ENCODE measurements at regions of chr1 and their contacts with region 1.

Region 1: DNA sequence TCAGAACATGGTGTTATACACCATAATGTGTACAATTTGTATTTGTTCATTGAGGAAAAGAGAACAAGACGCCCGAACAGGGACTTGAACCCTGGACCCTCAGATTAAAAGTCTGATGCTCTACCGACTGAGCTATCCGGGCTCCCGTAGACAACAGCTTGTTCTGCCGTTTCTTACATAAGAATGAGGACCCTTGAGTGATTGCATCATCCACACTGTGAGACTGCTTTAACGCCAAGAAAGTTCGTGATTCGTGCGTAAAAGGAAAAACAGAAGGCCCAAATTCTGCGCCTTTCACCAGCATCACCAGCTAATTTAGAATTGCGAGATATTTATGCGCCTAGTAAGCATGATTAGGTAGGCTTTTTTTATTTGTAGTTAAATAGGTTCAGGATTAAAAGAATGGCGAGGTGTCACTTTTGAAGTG is 9.2 kb upstream of the MDM4 start:
- DNase-seq: peak; percentile 57 to 96 (median 93)
- ATAC-seq: peak; percentile 83
- H3K4me3 ChIP-seq: peak overlapping the region; percentile 66
- H3K4me3 Mint-ChIP-seq: peak overlapping the region; percentile 81 to 98 (median 94)
- H3K27ac ChIP-seq: peak overlapping the region; percentile 90
- H3K27ac Mint-ChIP-seq: peak overlapping the region; percentile 95 to 100 (median 99)
- H3K4me1 ChIP-seq: peaks cover 11 to 20% of the 10 kb centered on the region in 2 donors
- H3K4me1 Mint-ChIP-seq: peaks cover 19 to 57% (median 44%) of the 10 kb centered on the region in 7 donors
- H3K27me3 ChIP-seq: no peaks in the 10 kb centered on the region
- H3K27me3 Mint-ChIP-seq: peaks cover 0 to 6% (median 4%) of the 10 kb centered on the region in 5 donors

Region 2: DNA sequence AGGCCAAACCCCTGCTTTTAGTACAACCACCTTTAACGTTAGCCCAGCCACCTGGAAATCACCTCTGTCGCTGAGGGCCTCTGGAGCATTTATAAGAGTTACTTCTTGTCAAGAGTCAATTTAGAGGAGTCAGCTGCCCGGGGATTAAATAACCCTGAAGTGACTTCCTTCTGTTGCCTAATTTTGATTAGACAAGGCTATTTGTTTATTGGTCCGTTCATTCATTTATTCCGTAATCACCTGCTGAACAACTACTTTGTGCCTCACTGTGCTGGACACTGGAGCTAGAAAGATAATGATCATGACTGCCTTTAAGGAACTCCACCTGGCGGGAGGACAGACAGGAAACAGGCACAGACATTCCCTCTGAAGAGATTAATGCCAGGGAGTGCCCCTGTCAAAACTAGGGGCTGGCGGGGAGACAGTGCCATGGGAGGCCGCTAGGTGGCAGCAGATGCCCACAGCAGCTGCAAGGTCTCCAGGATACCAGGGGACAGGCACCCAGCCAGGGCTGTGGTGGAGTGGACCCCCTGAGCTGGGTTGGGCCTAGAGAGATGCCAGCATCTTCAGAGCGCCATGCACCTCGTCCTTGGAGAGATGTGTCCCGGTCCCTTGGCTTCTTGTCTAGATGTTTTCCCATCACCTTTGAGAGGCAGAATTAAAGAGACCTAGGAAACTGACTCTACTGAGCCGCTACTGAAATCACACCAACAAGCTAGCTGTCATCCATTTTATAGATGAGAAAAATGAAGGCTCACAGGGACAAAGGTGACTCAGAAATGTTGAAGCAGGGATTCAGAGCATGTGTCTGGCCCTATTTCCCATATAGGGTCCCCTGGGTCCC is 344.5 kb before region 1 on chr1:
- CTCF ChIA-PET with region 1: interaction called, 3 read pairs
- POLR2A ChIA-PET with region 1: no interaction called
- intact Hi-C with region 1: loop called (anchors 1 to 2 kb)
- DNase-seq: peak; percentile 60 to 81 (median 71)
- ATAC-seq: peak; percentile 90
- H3K4me3 ChIP-seq: no peak overlapping the region
- H3K4me3 Mint-ChIP-seq: no peak overlapping the region
- H3K27ac ChIP-seq: no peak overlapping the region
- H3K27ac Mint-ChIP-seq: no peak overlapping the region
- H3K4me1 ChIP-seq: no peaks in the 10 kb centered on the region
- H3K4me1 Mint-ChIP-seq: no peaks in the 10 kb centered on the region
- H3K27me3 ChIP-seq: no peaks in the 10 kb centered on the region
- H3K27me3 Mint-ChIP-seq: peaks cover 5 to 18% (median 9%) of the 10 kb centered on the region in 5 donors

Region 3: DNA sequence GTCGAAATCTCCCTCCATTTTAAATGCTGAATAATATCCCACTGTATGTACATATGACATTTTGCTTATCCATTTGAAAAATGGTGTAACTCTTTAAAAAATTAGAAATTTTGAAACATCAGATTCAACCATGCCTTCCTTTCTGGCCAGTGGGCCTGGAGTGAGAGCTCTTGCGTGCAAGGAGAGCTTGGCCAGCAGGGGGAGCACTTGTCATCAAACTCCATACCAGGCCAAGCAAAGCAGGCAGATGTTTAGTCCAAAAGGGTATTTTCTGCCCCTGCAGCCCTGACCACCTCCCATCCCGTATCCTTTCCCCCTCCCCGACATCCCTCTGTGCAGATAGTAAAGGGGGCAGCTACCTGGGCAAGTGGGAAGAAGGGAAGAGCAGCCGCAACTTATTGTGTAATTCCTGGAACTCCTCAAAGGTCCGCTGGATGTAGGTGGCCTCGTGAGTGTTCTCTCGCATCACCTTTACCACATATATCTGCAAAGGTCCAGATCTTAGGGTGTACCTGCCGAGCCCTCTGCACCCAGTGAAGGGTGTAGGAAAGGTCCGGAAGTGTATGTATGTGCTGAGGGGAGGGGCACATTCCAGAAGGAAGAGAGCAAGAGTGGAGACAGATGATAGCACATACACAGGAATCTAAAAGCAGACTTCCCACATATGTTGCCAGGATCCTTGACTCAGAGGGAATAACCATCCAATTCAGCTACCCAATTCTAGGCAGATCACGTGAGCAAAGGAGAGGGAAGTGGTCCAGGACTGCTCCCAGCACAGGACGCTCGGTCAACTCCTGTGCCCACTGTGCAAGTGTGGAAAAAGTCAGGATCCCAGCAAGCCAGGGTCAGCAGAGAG is 75.4 kb before region 1 on chr1:
- CTCF ChIA-PET with region 1: interaction called, 434 read pairs
- POLR2A ChIA-PET with region 1: interaction called, 4 read pairs
- intact Hi-C with region 1: loop called (anchors 1 kb)
- DNase-seq: peak; percentile 52 to 75 (median 69)
- ATAC-seq: peak; percentile 88
- H3K4me3 ChIP-seq: no peak overlapping the region
- H3K4me3 Mint-ChIP-seq: no peak overlapping the region
- H3K27ac ChIP-seq: no peak overlapping the region
- H3K27ac Mint-ChIP-seq: peak overlapping the region in 5 of 9 donors; percentile 6 to 69 (median 42)
- H3K4me1 ChIP-seq: no peaks in the 10 kb centered on the region
- H3K4me1 Mint-ChIP-seq: peaks cover 0 to 13% (median 4%) of the 10 kb centered on the region in 7 donors
- H3K27me3 ChIP-seq: no peaks in the 10 kb centered on the region
- H3K27me3 Mint-ChIP-seq: no peaks in the 10 kb centered on the region

Region 4: GRCh38 chr1:204480515-204480914 is 26.5 kb before region 1 on chr1:
- CTCF ChIA-PET with region 1: interaction called, 3 read pairs
- POLR2A ChIA-PET with region 1: interaction called, 3 read pairs
- intact Hi-C with region 1: loop called in 1 of 2 experiments (anchors 2 kb)
- DNase-seq: no peak
- ATAC-seq: peak; percentile 26
- H3K4me3 ChIP-seq: no peak overlapping the region
- H3K4me3 Mint-ChIP-seq: peak overlapping the region in 7 of 10 donors; percentile 5 to 69 (median 61)
- H3K27ac ChIP-seq: no peak overlapping the region
- H3K27ac Mint-ChIP-seq: peak overlapping the region in 6 of 9 donors; percentile 43 to 84 (median 74)
- H3K4me1 ChIP-seq: peaks cover 13 to 44% of the 10 kb centered on the region in 2 donors
- H3K4me1 Mint-ChIP-seq: peaks cover 40 to 89% (median 80%) of the 10 kb centered on the region in 7 donors
- H3K27me3 ChIP-seq: no peaks in the 10 kb centered on the region
- H3K27me3 Mint-ChIP-seq: no peaks in the 10 kb centered on the region

Region 5: DNA sequence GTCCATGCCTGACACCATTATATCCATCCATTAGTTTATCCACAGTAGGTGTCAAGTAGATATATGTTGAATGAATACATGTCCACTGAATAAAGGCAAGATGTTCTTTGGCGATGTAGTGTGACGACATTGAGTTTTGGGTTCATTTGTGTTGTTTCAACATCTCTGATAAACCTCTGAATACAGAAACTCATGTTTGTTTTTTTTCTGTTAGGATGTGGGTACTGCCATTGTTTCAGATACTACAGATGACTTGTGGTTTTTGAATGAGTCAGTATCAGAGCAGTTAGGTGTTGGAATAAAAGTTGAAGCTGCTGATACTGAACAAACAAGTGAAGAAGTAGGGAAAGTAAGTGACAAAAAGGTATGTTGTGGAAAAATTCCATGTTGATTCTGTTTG is 37.3 kb after region 1 on chr1:
- CTCF ChIA-PET with region 1: interaction called, 7 read pairs
- POLR2A ChIA-PET with region 1: interaction called, 25 read pairs
- intact Hi-C with region 1: loop called (anchors 1 kb)
- DNase-seq: peak in 7 of 9 donors; percentile 47 to 76 (median 67)
- ATAC-seq: peak; percentile 96
- H3K4me3 ChIP-seq: no peak overlapping the region
- H3K4me3 Mint-ChIP-seq: peak overlapping the region; percentile 0 to 77 (median 60)
- H3K27ac ChIP-seq: peak overlapping the region; percentile 63
- H3K27ac Mint-ChIP-seq: peak overlapping the region; percentile 51 to 94 (median 81)
- H3K4me1 ChIP-seq: peaks cover 30 to 39% of the 10 kb centered on the region in 2 donors
- H3K4me1 Mint-ChIP-seq: peaks cover 29 to 71% (median 65%) of the 10 kb centered on the region in 7 donors
- H3K27me3 ChIP-seq: no peaks in the 10 kb centered on the region
- H3K27me3 Mint-ChIP-seq: no peaks in the 10 kb centered on the region

Region 6: GRCh38 chr1:204572931-204573891 is 66.2 kb after region 1 on chr1:
- CTCF ChIA-PET with region 1: no interaction called
- POLR2A ChIA-PET with region 1: no interaction called
- intact Hi-C with region 1: no loop called
- DNase-seq: no peak
- ATAC-seq: no peak
- H3K4me3 ChIP-seq: no peak overlapping the region
- H3K4me3 Mint-ChIP-seq: no peak overlapping the region
- H3K27ac ChIP-seq: no peak overlapping the region
- H3K27ac Mint-ChIP-seq: peak overlapping the region in 4 of 9 donors; percentile 36 to 57 (median 43)
- H3K4me1 ChIP-seq: peaks cover 0 to 2% of the 10 kb centered on the region in 2 donors
- H3K4me1 Mint-ChIP-seq: peaks cover 0 to 16% (median 10%) of the 10 kb centered on the region in 7 donors
- H3K27me3 ChIP-seq: no peaks in the 10 kb centered on the region
- H3K27me3 Mint-ChIP-seq: no peaks in the 10 kb centered on the region

Region 7: DNA sequence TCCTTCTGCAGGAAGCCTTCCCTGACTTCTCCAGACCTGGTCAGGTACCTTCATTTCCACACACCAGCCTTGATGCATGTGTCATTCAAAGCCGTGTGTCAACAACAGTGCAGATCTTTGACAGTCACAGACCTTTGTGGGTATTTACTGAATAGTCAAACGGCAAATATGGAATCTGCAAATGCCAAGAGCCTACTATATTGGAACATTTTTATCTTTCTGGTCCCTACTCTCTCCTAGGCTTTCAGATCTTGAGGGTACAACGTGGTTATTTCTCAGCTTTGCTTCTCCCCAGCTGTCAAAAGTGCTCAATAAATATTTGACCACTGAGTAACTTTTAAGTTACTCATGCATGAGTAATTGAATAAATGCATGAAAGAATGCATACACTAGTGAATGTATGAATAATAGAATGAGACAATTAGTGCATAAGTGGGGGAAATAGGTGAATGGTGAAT is 84.6 kb after region 1 on chr1:
- CTCF ChIA-PET with region 1: no interaction called
- POLR2A ChIA-PET with region 1: no interaction called
- intact Hi-C with region 1: no loop called
- DNase-seq: no peak
- ATAC-seq: no peak
- H3K4me3 ChIP-seq: no peak overlapping the region
- H3K4me3 Mint-ChIP-seq: no peak overlapping the region
- H3K27ac ChIP-seq: no peak overlapping the region
- H3K27ac Mint-ChIP-seq: no peak overlapping the region
- H3K4me1 ChIP-seq: no peaks in the 10 kb centered on the region
- H3K4me1 Mint-ChIP-seq: peaks cover 0 to 5% (median 0%) of the 10 kb centered on the region in 7 donors
- H3K27me3 ChIP-seq: no peaks in the 10 kb centered on the region
- H3K27me3 Mint-ChIP-seq: peaks cover 0 to 4% (median 0%) of the 10 kb centered on the region in 5 donors

Region 8: DNA sequence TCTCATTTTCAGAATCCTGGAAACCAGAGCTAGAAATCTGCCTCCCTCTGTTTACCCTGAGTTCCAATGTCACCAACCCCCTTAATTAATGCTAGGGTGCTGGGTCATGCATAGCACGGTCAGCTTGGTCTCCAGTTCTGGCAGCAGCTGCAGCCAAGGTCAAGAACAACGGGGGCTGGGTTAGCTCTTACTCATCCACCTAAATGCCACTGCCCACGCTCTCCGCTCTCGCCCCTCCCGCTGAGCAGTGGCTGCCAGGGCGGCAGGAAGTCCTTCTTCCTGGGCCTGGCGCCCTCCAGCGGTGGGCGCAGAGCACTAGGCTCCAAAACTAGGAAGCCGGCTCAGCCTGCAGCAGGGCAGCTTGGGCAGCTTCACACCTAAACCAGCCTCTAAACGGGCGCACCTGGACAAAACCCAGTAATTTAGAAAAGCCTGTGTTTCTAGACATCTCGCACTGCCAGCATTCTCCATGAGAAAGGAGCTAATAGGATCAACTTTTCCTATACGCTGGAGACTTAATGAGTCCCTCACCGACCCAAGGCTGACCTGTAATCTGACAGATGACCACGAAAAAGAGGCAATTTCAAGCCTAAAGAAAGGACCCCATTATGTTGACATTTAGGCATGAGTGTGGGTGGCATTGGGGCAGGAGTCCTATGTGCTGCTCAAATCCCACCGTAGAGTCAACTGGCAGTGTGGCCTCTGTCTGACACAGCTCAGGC is 256.9 kb after region 1 on chr1:
- CTCF ChIA-PET with region 1: interaction called, 4 read pairs
- POLR2A ChIA-PET with region 1: no interaction called
- intact Hi-C with region 1: loop called in 1 of 2 experiments (anchors 5 kb)
- DNase-seq: peak; percentile 44 to 80 (median 66)
- ATAC-seq: peak; percentile 96
- H3K4me3 ChIP-seq: peak overlapping the region; percentile 27
- H3K4me3 Mint-ChIP-seq: peak overlapping the region; percentile 46 to 74 (median 60)
- H3K27ac ChIP-seq: no peak overlapping the region
- H3K27ac Mint-ChIP-seq: no peak overlapping the region
- H3K4me1 ChIP-seq: peaks cover 4 to 9% of the 10 kb centered on the region in 2 donors
- H3K4me1 Mint-ChIP-seq: peaks cover 6 to 16% (median 7%) of the 10 kb centered on the region in 7 donors
- H3K27me3 ChIP-seq: no peaks in the 10 kb centered on the region
- H3K27me3 Mint-ChIP-seq: peaks cover 3 to 41% (median 11%) of the 10 kb centered on the region in 5 donors

Region 9: DNA sequence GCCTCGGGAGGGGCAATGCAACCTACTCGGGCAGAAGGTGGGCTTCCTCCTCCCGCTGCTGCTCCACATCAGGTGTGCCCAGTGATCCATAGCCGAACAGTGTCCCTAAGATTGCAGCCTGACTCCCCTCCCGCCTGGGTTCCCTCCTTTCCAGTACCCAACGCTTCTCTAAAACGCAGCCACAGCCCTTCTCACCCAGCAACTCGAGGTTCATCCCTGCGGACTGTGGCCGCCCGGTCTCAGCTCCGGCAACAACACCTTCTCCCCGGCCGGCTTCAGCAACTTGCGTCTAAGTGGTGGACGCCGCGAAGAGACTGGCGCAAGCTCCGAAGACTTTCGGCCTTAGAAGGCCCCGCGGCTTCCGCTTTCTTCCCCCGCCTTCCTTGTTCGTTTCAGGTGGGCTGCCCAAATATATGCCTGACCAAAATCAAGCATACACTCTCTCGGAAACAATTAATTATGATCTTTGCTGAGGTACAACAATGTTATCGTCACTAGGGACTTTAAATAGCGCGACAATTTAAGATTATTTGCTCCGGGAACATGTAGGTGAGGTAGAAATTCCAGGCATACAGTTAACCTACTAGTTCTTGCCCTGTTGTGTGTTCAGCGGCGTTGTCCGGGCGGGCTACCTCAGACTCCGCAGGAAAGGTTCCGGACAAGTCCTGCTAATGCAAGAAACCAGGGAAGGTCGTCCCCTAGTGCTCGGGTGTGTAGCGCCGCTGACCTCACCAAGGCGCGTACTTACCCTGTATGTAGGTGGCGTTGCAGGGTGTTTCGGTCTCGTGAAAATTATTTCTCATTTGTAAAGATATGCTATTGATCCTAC is 614.9 kb after region 1 on chr1 and contains the start of gene RBBP5:
- CTCF ChIA-PET with region 1: no interaction called
- POLR2A ChIA-PET with region 1: no interaction called
- intact Hi-C with region 1: loop called in 1 of 2 experiments (anchors 1 kb)
- DNase-seq: peak; percentile 87 to 97 (median 93)
- ATAC-seq: peak; percentile 98
- H3K4me3 ChIP-seq: peak within 1 kb of the TSS; percentile 89
- H3K4me3 Mint-ChIP-seq: peak within 1 kb of the TSS; percentile 89 to 99 (median 96)
- H3K27ac ChIP-seq: peak within 1 kb of the TSS; percentile 86
- H3K27ac Mint-ChIP-seq: peak within 1 kb of the TSS; percentile 98 to 100 (median 99)
- H3K4me1 ChIP-seq: peaks cover 18 to 24% of the 10 kb centered on the region in 2 donors
- H3K4me1 Mint-ChIP-seq: peaks cover 30 to 56% (median 51%) of the 10 kb centered on the region in 7 donors
- H3K27me3 ChIP-seq: no peaks in the 10 kb centered on the region
- H3K27me3 Mint-ChIP-seq: no peaks in the 10 kb centered on the region
- total RNA-seq, gene RBBP5: 11.0 to 31.5 (median 21.0) TPM

Measured in naive thymus-derived CD4-positive, alpha-beta T cell (primary cell).